ENCODE measurements at regions of chr14 and their contacts with region 1.

Region 1: GRCh38 chr14:24806061-24806678 is 172.2 kb upstream of the GZMB start:
- ATAC-seq: peak in 7 of 8 experiments; percentile 43 to 76 (median 67)
- H3K4me3 ChIP-seq: no peak overlapping the region
- H3K27ac ChIP-seq: no peak overlapping the region
- H3K4me1 ChIP-seq: peaks cover 0 to 4% of the 10 kb centered on the region in 2 donors

Region 2: GRCh38 chr14:24565766-24566165 is 240.4 kb before region 1 on chr14:
- in situ Hi-C with region 1: no loop called
- ATAC-seq: no peak
- H3K4me3 ChIP-seq: no peak overlapping the region
- H3K27ac ChIP-seq: no peak overlapping the region
- H3K4me1 ChIP-seq: no peaks in the 10 kb centered on the region

Region 3: DNA sequence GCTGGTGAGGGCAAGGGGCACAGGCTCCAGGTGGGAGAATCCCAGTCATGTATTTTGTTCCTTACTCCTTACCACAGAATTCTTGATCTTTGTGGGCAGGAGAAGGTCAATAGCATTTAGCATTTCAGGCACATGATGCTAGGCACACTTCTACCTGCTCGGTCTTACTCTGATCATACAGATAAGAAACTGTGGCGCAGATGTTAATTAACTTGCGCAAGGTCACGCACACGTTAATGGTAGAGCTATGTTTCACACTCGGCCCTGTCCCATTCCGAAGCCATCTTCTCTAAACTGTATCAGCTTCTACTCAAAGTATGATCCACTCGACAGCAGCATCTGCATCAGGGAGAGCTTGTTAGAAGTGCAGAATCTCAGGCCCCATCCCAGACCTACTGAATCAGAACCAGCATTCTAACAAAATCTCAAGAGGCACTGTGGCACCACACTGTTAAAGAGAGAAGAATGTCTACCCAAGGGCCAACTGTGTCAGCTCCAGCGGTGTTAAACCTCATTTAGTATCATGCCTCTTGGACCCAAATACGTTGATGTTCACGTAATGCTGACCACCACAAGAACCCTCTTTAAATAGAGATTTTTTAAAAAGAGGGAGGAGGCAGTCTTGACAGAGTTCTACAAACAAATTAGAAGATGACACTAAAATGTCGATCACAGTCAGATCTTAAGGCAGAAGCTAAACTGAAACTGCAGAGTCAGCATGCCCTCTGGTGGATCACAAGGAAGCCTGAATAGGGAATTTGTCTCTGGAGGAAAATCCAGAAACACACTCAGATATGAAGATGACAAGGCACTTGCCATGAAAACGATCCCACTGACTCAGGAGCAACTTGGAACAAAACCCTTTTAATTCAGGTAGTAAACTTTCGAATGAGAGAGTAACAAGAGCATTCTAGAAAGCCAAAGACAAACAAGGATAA is 236.5 kb after region 1 on chr14:
- in situ Hi-C with region 1: loop called in 3 of 9 experiments (anchors 5 to 25 kb)
- ATAC-seq: peak in 3 of 8 experiments; percentile 25 to 59 (median 51)
- H3K4me3 ChIP-seq: no peak overlapping the region
- H3K27ac ChIP-seq: no peak overlapping the region
- H3K4me1 ChIP-seq: no peaks in the 10 kb centered on the region

Region 4: DNA sequence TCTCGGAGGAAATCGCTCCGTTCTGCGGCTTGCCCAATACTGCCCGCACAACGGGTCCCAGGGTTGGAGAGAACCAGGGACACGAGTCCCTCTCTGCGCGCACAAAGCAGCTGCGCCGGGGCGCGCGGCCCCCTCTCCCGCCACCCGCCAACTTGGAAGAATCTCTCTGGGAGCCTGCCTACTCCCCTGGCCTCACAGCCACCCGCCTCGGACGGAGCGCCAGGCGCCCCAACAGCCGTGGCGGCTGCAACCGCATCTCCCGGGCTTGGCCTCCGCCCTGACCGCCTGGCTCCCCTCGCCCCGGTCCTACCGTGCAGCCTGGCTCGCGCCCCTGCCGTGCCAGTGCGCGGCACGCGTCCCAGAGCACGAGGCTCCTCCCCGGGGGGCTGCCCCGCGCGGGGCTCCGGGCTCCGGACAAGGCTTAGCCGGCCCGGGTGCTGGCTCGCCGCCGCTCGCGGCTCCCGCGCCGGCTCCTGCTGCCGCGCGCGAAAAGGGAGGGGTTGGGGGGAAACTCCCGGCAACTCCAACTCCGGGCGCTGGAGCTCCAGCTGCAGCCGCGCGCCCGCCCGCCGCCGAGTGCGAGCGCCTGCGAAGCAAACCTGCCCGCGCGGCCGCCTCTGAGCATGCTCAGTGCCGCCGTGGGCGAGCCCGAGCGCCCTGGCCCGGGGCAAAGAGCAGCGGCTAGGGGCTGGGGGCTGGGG is 243.5 kb after region 1 on chr14 and contains the start of gene STXBP6:
- in situ Hi-C with region 1: loop called in 3 of 9 experiments (anchors 5 to 25 kb)
- ATAC-seq: peak; percentile 82 to 96 (median 94)
- H3K4me3 ChIP-seq: peak within 1 kb of the TSS; percentile 46 to 78 (median 54)
- H3K27ac ChIP-seq: no peak within 1 kb of the TSS
- H3K4me1 ChIP-seq: no peaks in the 10 kb centered on the region
- total RNA-seq, gene STXBP6: 1.0 to 13.2 (median 4.4) TPM

Region 5: DNA sequence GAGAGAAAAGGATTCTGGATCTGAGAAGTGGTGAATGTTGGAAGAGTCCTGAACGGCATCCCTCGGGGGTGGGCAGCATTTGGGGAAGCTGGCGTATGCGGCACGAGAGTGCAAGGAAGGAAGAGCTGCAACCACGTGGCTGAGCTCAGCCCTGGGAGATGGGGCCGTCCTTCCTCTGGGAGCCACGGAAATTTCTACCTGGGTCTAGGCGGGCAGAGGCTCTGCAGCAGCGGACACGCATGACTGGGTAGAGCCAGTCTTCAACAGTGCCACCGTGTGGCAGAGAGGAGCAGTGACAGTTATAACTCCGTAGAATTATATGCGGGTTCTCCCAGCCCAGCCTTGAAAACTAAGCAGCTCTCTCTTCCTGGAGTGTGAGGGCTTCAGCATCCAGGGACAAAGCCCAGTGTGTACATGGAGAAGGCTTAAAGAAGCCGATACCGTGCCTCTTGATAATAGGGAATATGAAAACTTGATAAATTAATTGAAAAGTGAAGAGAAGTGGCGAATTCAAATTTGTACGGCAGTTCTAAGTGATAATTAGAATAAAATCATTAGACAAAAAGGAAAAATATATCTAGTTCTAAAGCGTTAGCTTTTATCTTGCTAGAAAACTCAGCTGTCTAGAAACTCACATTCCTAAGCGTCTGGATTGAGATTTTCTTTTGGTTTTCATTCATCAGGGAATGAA is 326.7 kb after region 1 on chr14:
- in situ Hi-C with region 1: loop called in 2 of 9 experiments (anchors 10 to 25 kb)
- ATAC-seq: peak; percentile 86 to 99 (median 96)
- H3K4me3 ChIP-seq: no peak overlapping the region
- H3K27ac ChIP-seq: no peak overlapping the region
- H3K4me1 ChIP-seq: no peaks in the 10 kb centered on the region

Measured in motor neuron (in vitro differentiated cells).